ENCODE measurements at regions of chr10 and their contacts with region 1.

Region 1: DNA sequence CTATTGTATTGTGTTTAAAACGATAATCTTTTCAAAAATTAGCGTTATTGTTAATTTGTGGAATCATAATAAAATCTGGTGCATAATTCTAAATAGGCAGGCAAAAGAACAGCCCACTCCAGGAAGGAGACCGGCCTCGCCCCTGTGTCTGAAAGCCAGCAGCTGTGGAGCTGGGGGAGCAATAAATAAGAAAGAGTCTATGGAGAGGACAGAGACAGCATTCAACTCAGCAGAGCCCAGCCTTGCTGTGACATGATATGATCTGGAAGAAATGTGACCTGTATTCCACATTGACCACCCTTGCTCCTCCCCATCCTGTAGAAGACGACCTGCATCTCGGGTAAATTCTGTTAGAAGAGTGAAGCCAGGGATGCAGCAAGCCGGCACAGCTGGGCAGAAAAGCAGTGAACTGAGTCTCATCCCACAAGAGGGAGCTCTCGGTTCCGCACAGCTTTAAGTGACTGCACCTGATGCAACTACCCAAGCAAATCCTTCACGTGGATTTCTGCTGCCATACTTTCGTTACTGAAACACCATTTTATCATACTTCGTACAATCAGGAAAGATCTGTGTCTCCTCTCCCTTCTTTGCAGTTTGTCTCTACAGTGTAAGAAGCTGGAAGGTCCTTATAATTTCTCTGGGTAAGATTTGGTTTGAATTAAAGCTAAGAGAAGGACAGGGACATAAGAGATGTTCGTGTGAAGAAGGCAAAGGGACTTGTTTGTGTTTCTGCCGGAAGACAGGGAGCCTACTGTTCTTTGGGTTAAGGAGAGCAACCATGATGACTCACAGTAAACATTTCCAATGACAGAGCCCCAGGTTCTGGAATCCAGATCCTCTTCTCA is 427.1 kb downstream of the GPAM start:
- DNase-seq: peak; percentile 21 to 83
- H3K4me3 ChIP-seq: no peak overlapping the region
- CTCF ChIP-seq: no peak
- POLR2A ChIP-seq: no peak

Region 2: DNA sequence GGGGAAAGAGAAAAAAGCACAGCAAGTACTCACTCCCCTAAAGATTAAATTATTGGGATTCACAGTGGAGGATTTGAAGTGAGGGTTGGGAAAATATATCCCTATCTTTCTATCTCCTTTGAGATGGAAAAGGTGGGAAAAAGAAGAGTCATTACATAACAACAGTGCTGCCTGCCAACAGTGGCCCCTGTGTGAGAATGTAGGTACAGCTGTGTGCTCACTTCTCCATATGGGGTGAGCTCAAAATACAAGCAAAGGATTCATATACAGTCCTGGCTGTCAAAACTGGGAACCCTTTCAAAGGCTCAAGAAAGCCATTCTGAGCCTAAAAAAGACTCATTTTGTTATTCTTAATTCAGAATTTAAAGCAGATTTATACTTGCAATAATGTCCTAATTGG is 31.4 kb before region 1 on chr10:
- intact Hi-C with region 1: no loop called
- DNase-seq: no peak
- H3K4me3 ChIP-seq: no peak overlapping the region
- CTCF ChIP-seq: no peak
- POLR2A ChIP-seq: no peak

Region 3: DNA sequence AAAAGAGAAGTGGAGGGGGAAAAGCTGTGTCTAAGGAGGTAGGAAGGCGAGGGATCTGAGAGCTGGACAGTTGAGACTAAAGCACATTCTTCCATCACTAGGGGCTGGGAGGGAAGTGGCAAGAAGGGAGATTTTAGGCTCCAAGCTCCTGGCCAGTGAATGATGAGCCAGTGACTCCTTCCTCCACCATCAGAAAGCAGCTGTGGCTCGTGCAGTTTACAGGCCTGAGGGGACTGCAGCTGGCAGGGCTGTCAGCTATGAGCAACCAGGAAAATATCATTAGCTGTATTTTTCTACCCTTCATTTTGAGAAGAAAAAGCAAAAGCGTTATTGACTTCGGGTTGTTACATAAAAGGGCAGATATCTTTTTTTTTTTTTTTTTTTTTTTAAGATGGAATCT is 366.4 kb after region 1 on chr10:
- intact Hi-C with region 1: loop called (anchors 10 kb)
- DNase-seq: no peak
- H3K4me3 ChIP-seq: no peak overlapping the region
- CTCF ChIP-seq: no peak
- POLR2A ChIP-seq: no peak